ENCODE measurements at regions of chr7 and their contacts with region 1.

Region 1: GRCh38 chr7:142873281-142873787 is 12.2 kb downstream of the TRPV6 start:
- DNase-seq: peak; percentile 66
- H3K4me3 Mint-ChIP-seq: no peak overlapping the region
- H3K27ac Mint-ChIP-seq: no peak overlapping the region
- H3K4me1 Mint-ChIP-seq: no peaks in the 10 kb centered on the region
- H3K27me3 Mint-ChIP-seq: peaks cover 66% of the 10 kb centered on the region
- CTCF ChIP-seq: peak; percentile 57

Region 2: GRCh38 chr7:142842251-142842766 is 31.0 kb before region 1 on chr7:
- CTCF ChIA-PET with region 1: no interaction called
- intact Hi-C with region 1: no loop called
- DNase-seq: no peak
- H3K4me3 Mint-ChIP-seq: no peak overlapping the region
- H3K27ac Mint-ChIP-seq: no peak overlapping the region
- H3K4me1 Mint-ChIP-seq: peaks cover 8% of the 10 kb centered on the region
- H3K27me3 Mint-ChIP-seq: peaks cover 4% of the 10 kb centered on the region
- CTCF ChIP-seq: no peak

Region 3: DNA sequence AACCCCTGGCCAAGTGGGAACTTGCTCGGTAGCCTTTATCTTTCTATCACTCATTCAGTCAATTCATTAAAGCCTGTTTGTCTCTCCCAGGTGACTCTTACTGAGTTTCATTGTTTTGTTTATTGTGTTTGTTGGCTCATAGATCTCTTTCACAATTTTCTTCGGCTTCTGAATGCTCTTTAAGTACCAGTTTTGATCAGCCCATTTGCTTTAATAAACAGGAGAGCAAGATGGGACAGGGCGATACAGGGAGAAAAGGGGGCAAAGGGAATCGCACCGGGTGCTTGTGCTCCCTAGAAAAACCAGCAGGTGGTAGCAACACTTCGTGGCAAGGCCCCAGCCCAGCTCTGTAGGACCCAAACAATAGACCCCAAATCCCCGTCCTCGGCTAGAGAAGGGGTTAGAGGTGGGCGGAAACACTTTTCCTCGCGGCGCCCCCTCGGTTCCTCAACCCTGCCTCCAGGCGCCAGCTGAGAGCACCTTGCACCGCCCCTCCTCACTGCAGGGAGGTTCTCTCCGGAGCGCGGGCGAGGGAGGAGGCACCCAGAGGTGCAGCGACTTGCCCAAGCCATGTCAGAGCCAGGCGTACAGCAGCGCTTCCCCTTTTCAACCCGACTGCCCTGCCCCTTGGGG is 19.5 kb before region 1 on chr7:
- CTCF ChIA-PET with region 1: no interaction called
- intact Hi-C with region 1: no loop called
- DNase-seq: peak; percentile 70
- H3K4me3 Mint-ChIP-seq: peak overlapping the region; percentile 91
- H3K27ac Mint-ChIP-seq: peak overlapping the region; percentile 69
- H3K4me1 Mint-ChIP-seq: peaks cover 21% of the 10 kb centered on the region
- H3K27me3 Mint-ChIP-seq: peaks cover 75% of the 10 kb centered on the region
- CTCF ChIP-seq: peak; percentile 85

Region 4: GRCh38 chr7:142960955-142961512 is 87.7 kb after region 1 on chr7:
- CTCF ChIA-PET with region 1: interaction called, 18 read pairs
- intact Hi-C with region 1: no loop called
- DNase-seq: peak; percentile 43
- H3K4me3 Mint-ChIP-seq: no peak overlapping the region
- H3K27ac Mint-ChIP-seq: no peak overlapping the region
- H3K4me1 Mint-ChIP-seq: peaks cover 15% of the 10 kb centered on the region
- H3K27me3 Mint-ChIP-seq: peaks cover 49% of the 10 kb centered on the region
- CTCF ChIP-seq: peak; percentile 25